ENCODE measurements at regions of chr20 and their contacts with region 1.

Region 1: DNA sequence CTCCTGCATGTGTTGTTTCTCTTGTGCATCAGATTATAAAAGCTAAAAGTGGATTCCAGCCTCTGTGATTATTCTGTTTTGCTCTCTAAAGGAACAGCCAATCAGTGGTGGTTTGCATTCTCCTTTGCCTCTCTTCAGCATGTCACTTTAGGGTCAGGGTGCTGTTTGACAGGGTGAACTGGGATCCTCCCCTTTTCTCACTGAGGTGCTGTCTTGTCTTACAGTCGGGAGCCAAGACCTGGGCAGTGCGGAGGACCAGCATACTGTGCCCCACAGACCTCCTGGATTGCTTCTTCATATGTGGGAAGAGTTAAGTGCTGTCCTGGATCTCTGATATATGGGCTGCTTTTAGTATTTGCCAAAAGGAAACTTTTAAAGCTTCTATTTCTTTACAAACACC is 15.2 kb upstream of the CST2 start:
- DNase-seq: no peak
- ATAC-seq: no peak
- H3K4me3 ChIP-seq: no peak overlapping the region
- H3K27ac ChIP-seq: no peak overlapping the region
- H3K4me1 ChIP-seq: no peaks in the 10 kb centered on the region
- H3K27me3 ChIP-seq: peaks cover 0 to 7% (median 0%) of the 10 kb centered on the region in 7 donors
- CTCF ChIP-seq: no peak

Region 2: DNA sequence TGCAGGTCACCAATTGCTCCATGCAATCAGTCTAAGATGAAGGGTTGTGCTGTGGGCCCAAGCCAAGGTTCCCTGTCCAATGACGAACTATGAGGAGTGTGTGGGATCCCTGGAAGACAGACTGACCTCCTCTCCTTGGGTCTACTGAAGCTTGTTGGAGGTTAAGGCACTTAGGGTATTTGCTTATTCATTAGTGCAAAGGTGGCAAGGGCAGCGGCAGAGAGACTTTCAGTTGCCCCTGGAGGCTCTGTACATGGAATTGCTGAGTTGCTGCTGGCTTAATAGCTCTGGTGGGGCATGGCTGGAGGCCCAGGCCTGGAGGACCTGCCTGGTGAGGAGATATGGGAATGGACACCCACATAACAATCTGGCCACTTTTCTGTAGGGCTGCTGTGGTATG is 67.7 kb after region 1 on chr20:
- intact Hi-C with region 1: loop called in 1 of 10 experiments (anchors 10 kb)
- DNase-seq: no peak
- ATAC-seq: no peak
- H3K4me3 ChIP-seq: no peak overlapping the region
- H3K27ac ChIP-seq: no peak overlapping the region
- H3K4me1 ChIP-seq: no peaks in the 10 kb centered on the region
- H3K27me3 ChIP-seq: peaks cover 0 to 40% (median 11%) of the 10 kb centered on the region in 7 donors
- CTCF ChIP-seq: no peak

Region 3: DNA sequence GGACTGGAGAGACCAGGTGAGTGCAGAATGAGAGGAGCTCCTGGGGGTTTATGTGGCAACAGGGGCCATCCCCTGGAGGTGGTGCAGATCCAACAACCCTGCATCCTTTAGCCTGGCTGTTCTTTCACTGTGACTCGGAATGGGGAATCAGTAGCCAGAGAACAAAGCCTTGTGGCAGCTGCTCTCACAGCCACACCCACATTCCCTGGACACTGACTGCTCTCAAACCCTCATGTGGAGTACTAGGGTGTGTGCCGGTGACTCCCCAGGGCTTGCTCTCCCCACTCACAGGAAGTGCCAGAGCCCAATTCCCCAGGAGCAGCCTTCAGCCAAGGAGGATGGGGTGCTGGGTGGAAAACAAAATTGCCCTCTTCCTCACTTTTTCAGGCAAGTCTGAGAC is 177.1 kb after region 1 on chr20:
- intact Hi-C with region 1: no loop called
- DNase-seq: no peak
- ATAC-seq: peak in 2 of 8 donors; percentile 17 to 27
- H3K4me3 ChIP-seq: no peak overlapping the region
- H3K27ac ChIP-seq: no peak overlapping the region
- H3K4me1 ChIP-seq: no peaks in the 10 kb centered on the region
- H3K27me3 ChIP-seq: peaks cover 0 to 20% (median 0%) of the 10 kb centered on the region in 7 donors
- CTCF ChIP-seq: no peak

Measured in heart right ventricle (tissue), 16 donors.